ENCODE measurements at regions of chr17 and their contacts with region 1.

Region 1: GRCh38 chr17:42101513-42102319 is 3.4 kb upstream of the ZNF385C start:
- DNase-seq: peak; percentile 84
- H3K4me3 Mint-ChIP-seq: no peak overlapping the region
- H3K27ac Mint-ChIP-seq: no peak overlapping the region
- H3K4me1 Mint-ChIP-seq: peaks cover 8% of the 10 kb centered on the region
- H3K27me3 Mint-ChIP-seq: peaks cover 13% of the 10 kb centered on the region

Region 2: GRCh38 chr17:42027961-42028790 is 73.5 kb before region 1 on chr17:
- CTCF ChIA-PET with region 1: interaction called, 211 read pairs
- POLR2A ChIA-PET with region 1: interaction called, 3 read pairs
- intact Hi-C with region 1: loop called (anchors 1 kb)
- DNase-seq: no peak
- H3K4me3 Mint-ChIP-seq: no peak overlapping the region
- H3K27ac Mint-ChIP-seq: no peak overlapping the region
- H3K4me1 Mint-ChIP-seq: peaks cover 5% of the 10 kb centered on the region
- H3K27me3 Mint-ChIP-seq: no peaks in the 10 kb centered on the region